AG04449 (cell line): ENCODE measurements at regions of chr13 and their contacts with region 1.

Region 1: GRCh38 chr13:91078093-91078679 is 269.3 kb upstream of the MIR17HG start:
- DNase-seq: no peak
- H3K4me3 ChIP-seq: no peak overlapping the region
- CTCF ChIP-seq: no peak

Region 2: GRCh38 chr13:91185294-91185863 is 107.2 kb after region 1 on chr13:
- CTCF ChIA-PET with region 1: interaction called, 11 read pairs
- POLR2A ChIA-PET with region 1: no interaction called
- DNase-seq: no peak
- H3K4me3 ChIP-seq: no peak overlapping the region
- CTCF ChIP-seq: no peak